Colonic mucosa (tissue), 4 donors: ENCODE measurements at regions of chrX and their contacts with region 1.

Region 1: DNA sequence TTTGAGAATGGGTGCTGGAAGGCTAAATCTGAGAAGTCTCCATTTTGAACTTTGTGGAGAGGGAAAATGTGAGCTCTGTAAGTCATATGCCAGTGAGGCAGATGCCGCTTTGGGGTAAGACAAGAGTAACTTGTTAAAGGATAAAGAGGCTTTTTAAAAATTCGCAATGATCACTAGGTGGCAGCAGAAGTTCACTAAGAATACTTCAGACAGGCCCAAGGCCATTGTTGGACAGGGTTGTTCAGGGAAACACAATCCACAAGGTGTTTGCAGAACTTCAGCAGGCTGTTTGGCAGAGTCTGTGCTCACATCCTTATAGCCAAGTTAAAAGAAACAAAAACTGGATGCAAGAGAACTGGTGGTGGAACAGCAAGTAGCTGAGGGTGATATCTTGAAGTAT is 13.7 kb upstream of the PIGA start:
- DNase-seq: peak; percentile 23
- H3K4me3 ChIP-seq: no peak overlapping the region
- H3K27ac ChIP-seq: no peak overlapping the region
- H3K4me1 ChIP-seq: no peaks in the 10 kb centered on the region
- H3K27me3 ChIP-seq: no peaks in the 10 kb centered on the region
- CTCF ChIP-seq: peak; percentile 42

Region 2: DNA sequence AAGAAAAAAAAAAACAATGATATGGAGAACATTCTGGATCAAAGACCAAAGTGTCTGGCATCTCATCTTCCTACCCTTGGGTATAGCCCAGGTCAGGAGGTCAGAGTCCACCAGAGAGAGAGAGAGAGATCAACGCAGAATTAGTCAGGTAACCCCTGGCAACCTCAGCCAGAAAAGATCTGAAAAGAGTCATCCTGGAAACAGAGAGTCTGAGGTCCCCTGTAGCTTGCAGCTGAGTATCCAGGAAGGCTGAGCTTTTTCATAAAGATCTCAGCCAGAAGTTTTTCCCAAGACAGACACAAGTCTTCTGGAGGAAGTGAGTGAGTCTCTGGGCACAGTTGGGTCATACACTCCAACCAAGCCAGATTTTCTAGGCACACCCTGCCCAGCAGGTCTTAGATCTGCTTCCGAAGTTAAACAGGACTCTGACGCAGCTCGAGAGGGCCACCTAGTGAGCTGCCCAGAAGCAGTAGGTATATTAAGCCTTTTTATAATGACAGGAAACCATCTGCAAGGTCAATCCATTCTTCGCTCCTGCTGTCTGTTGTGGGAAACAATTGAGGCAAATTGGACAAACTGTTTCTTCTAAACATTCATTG is 216.0 kb after region 1 on chrX:
- intact Hi-C with region 1: loop called (anchors 10 kb)
- DNase-seq: peak; percentile 70
- H3K4me3 ChIP-seq: no peak overlapping the region
- H3K27ac ChIP-seq: no peak overlapping the region
- H3K4me1 ChIP-seq: no peaks in the 10 kb centered on the region
- H3K27me3 ChIP-seq: no peaks in the 10 kb centered on the region
- CTCF ChIP-seq: peak; percentile 34